ENCODE measurements at regions of chr7 and their contacts with region 1.

Region 1: GRCh38 chr7:138738551-138739335 is 37.6 kb upstream of the SVOPL start:
- DNase-seq: peak; percentile 78 to 88
- H3K4me3 ChIP-seq: no peak overlapping the region
- H3K4me3 Mint-ChIP-seq: peak overlapping the region; percentile 9
- H3K27ac Mint-ChIP-seq: peak overlapping the region; percentile 43
- H3K4me1 ChIP-seq: peaks cover 6% of the 10 kb centered on the region; the same call in 1 of the 2 replicates
- H3K4me1 Mint-ChIP-seq: peaks cover 9% of the 10 kb centered on the region
- H3K27me3 ChIP-seq: no peaks in the 10 kb centered on the region
- H3K27me3 Mint-ChIP-seq: no peaks in the 10 kb centered on the region
- CTCF ChIP-seq: peak; percentile 91 to 92

Region 2: GRCh38 chr7:137898839-137899721 is 839.7 kb before region 1 on chr7:
- CTCF ChIA-PET with region 1: interaction called, 6 read pairs
- POLR2A ChIA-PET with region 1: no interaction called
- intact Hi-C with region 1: loop called (anchors 1 kb)
- DNase-seq: peak; percentile 84 to 89
- H3K4me3 ChIP-seq: no peak overlapping the region
- H3K4me3 Mint-ChIP-seq: no peak overlapping the region
- H3K27ac Mint-ChIP-seq: peak overlapping the region; percentile 54
- H3K4me1 ChIP-seq: peaks cover 6% of the 10 kb centered on the region
- H3K4me1 Mint-ChIP-seq: peaks cover 20% of the 10 kb centered on the region
- H3K27me3 ChIP-seq: no peaks in the 10 kb centered on the region
- H3K27me3 Mint-ChIP-seq: no peaks in the 10 kb centered on the region
- CTCF ChIP-seq: peak; percentile 92 to 96

Region 3: DNA sequence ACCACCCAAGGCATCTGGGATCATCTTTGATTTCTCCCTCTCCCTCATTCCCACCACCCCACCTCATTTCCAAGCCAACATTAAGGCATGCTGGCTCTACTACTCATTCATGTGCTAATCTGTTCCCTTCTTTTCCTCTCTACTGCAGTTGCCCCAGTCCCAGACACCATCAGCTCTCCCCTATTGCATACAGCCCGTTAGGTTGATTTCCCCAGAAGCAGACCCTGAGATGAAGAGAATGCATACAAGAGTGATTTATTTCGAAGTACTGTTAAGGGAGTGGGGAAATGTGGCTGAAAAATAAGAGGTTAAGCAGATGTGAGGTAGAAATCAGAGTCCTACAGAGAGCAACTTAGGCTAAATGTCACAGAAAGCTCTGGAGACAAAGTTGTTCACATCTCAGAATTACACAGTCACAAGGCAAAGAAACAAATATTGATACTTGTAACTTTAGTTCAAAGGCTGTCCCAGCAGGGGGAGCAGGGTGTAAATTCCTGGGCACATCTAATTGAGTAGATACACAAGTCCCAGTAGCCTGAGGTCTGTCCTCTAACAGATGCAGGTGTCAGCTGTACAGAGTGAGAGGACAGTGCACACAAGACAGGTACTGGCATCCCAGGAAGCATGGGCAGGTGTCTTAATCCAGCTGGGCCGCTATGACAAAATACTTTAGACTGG is 641.5 kb before region 1 on chr7:
- CTCF ChIA-PET with region 1: no interaction called
- POLR2A ChIA-PET with region 1: no interaction called
- intact Hi-C with region 1: loop called (anchors 1 kb)
- DNase-seq: peak; percentile 71 to 77
- H3K4me3 ChIP-seq: no peak overlapping the region
- H3K4me3 Mint-ChIP-seq: no peak overlapping the region
- H3K27ac Mint-ChIP-seq: peak overlapping the region; percentile 74
- H3K4me1 ChIP-seq: peaks cover 6% of the 10 kb centered on the region
- H3K4me1 Mint-ChIP-seq: peaks cover 12% of the 10 kb centered on the region
- H3K27me3 ChIP-seq: no peaks in the 10 kb centered on the region
- H3K27me3 Mint-ChIP-seq: no peaks in the 10 kb centered on the region
- CTCF ChIP-seq: peak; percentile 43

Region 4: DNA sequence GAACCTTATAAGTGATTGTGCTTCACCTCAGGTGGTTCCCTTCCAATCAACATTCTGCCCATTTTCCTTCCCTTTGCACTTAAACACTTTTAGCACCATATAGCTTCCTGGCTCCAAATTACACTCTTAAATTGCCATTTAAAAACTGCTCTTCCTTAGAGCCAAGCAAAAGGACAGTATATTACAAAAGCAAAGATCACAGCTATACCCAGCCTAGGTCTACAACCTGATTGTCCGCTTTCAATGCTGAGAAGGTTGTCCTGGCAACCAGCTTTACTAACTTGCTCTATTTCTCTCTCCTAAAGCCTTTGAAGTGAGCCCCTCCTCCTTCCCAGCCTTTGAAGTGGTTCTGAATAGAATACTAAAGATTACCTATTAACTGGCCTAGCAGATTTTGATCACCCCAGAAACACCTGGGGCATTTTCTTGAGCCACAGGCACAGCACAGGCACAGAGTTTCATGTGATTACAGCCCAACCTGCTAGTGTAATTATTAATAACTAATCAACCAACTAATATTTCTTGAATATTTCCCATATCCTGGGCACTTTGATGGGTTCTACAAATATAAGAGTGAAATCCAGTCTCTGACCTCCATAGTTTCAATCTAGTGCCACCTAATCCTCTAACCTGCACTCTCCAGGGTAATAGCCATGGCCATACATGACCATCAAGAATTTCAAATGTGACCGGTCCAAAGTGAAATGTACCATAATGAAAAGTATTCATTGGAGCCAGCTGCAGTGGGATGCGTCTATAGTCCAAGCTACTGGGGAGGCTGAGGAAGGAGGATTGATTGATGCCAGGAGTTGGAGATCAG is 342.3 kb before region 1 on chr7:
- CTCF ChIA-PET with region 1: no interaction called
- POLR2A ChIA-PET with region 1: no interaction called
- intact Hi-C with region 1: loop called (anchors 10 kb)
- DNase-seq: peak; percentile 93 to 95
- H3K4me3 ChIP-seq: no peak overlapping the region
- H3K4me3 Mint-ChIP-seq: peak overlapping the region; percentile 67
- H3K27ac Mint-ChIP-seq: peak overlapping the region; percentile 97
- H3K4me1 ChIP-seq: peaks cover 15% of the 10 kb centered on the region
- H3K4me1 Mint-ChIP-seq: peaks cover 17% of the 10 kb centered on the region
- H3K27me3 ChIP-seq: no peaks in the 10 kb centered on the region
- H3K27me3 Mint-ChIP-seq: no peaks in the 10 kb centered on the region
- CTCF ChIP-seq: no peak

Region 5: DNA sequence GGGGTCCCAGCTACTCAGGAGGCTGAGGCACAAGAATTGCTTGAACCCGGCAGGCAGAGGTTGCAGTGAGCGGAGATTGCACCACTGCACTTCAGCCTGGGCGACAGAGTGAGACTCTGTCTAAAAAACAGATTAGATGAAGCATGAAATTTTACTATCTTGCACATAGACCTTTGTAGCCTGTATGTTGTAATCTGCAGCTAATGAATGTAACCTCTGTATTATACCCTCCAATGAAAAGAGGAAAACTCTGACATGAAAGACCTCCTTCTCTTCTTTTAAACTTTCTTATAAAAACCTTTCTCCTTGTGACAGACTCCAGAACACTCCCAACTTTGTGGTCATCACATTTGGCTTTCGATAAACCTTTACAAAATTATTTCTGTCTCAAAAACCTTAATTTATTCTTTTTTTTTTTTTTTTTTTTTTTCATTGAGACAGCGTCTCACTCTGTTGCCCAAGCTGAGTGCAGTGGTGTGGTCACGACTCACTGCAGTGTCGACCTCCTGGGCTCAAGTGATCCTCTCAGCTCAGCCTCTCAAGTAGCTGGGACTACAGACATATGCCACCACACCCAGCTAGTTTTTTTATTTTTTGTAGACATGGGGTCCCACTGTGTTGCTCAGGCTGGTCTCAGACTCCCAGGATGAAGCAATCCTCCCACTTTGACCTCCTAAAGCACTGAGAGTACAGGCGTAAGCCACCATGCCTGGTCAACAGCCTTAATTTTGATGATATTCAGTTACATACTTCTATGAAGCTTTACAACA is 135.0 kb before region 1 on chr7:
- CTCF ChIA-PET with region 1: no interaction called
- POLR2A ChIA-PET with region 1: no interaction called
- intact Hi-C with region 1: loop called (anchors 2 kb)
- DNase-seq: no peak
- H3K4me3 ChIP-seq: no peak overlapping the region
- H3K4me3 Mint-ChIP-seq: no peak overlapping the region
- H3K27ac Mint-ChIP-seq: no peak overlapping the region
- H3K4me1 ChIP-seq: no peaks in the 10 kb centered on the region
- H3K4me1 Mint-ChIP-seq: peaks cover 18% of the 10 kb centered on the region
- H3K27me3 ChIP-seq: no peaks in the 10 kb centered on the region
- H3K27me3 Mint-ChIP-seq: no peaks in the 10 kb centered on the region
- CTCF ChIP-seq: no peak

Region 6: DNA sequence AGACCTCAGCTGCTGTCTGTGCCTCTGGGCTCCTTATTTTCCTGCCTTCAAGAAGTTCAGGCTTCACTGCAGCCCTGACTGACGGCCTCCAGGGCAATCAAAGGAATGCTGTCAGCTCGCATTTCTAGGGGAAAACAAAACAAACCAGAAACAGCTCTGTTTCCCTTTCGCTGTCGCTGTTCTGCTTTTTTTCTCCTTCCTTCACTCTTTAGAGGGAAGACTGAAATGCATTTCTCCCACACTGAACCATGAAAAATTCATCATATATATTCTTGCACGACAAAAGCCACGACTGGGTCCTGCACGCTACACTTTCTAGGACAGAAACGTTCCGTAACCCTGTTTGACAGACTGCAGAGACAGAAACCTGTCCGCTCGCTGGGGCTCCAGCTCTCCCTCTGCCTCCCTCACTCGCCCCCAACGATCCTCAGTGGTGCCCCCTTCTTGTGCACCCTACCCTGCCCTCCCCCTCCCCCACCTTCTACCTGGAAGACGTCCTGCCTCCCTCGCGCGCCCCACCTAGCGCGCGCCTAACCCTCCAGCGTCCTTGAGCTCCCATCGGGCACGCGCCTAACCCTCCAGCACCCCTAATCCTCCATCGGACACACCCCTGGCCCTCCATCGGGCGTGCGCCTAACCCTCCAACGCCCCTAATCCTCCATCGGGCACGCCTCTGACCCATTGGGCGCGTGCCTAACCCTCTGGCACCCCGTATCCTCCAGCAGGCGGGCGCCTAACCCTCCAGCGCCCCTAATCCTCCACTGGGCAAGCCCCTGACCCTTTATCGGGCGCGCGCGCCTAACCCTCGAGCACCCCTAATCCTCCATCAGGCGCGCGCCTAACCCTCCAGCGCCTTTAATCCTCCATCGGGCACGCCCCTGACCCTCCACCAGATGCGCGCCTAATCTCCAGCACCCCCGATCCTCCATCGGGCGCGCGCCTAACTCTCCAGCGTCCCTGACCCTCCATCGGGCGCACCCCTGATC is 74.7 kb before region 1 on chr7:
- CTCF ChIA-PET with region 1: interaction called, 4 read pairs
- POLR2A ChIA-PET with region 1: no interaction called
- intact Hi-C with region 1: loop called (anchors 2 kb)
- DNase-seq: peak; percentile 60 to 76
- H3K4me3 ChIP-seq: no peak overlapping the region
- H3K4me3 Mint-ChIP-seq: peak overlapping the region; percentile 30
- H3K27ac Mint-ChIP-seq: peak overlapping the region; percentile 48
- H3K4me1 ChIP-seq: peaks cover 61% of the 10 kb centered on the region
- H3K4me1 Mint-ChIP-seq: peaks cover 50% of the 10 kb centered on the region
- H3K27me3 ChIP-seq: no peaks in the 10 kb centered on the region
- H3K27me3 Mint-ChIP-seq: no peaks in the 10 kb centered on the region
- CTCF ChIP-seq: no peak

Region 7: GRCh38 chr7:138679793-138680192 is 59.0 kb before region 1 on chr7:
- CTCF ChIA-PET with region 1: no interaction called
- POLR2A ChIA-PET with region 1: no interaction called
- intact Hi-C with region 1: no loop called
- DNase-seq: no peak
- H3K4me3 ChIP-seq: no peak overlapping the region
- H3K4me3 Mint-ChIP-seq: no peak overlapping the region
- H3K27ac Mint-ChIP-seq: no peak overlapping the region
- H3K4me1 ChIP-seq: no peaks in the 10 kb centered on the region
- H3K4me1 Mint-ChIP-seq: no peaks in the 10 kb centered on the region
- H3K27me3 ChIP-seq: no peaks in the 10 kb centered on the region
- H3K27me3 Mint-ChIP-seq: no peaks in the 10 kb centered on the region
- CTCF ChIP-seq: no peak

Measured in Caco-2 (cell line).